GM10248 (cell line): ENCODE measurements at regions of chr12 and their contacts with region 1.

Region 1: DNA sequence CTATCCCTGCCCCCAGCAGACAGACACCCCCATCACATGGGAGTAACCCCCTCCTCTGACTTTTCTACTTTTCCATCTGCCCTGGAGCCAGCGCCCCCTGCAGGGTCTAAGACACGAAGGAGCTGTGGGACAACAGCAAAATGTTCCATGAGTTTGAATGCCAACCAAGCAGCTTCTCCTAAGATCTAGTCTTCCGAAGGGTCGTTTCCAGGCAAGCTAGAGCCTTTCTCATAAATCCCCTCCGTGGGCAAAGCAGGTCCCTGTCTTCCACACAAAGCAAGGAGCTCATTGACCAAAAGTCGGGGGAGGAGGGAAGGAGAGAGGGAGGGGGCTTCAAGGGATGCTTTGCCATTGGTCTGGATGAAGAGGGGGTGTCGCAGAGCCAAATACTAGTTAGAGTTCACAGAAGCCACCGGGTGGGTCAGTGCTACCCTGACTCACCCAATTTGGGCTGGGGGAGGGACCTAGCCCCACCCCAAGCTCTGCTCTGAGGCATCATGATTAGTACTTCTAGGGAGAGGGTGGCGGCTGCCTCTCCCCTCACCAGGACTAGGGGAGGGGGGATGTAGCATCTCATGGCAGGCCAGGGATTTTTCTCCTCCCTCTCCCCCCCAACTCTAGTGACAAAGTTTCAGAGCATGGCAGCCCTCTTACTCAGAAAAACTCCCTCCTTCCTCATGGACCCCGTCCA is 1.6 kb downstream of the MSI1 start:
- DNase-seq: no peak
- CTCF ChIP-seq: peak; percentile 41

Region 2: DNA sequence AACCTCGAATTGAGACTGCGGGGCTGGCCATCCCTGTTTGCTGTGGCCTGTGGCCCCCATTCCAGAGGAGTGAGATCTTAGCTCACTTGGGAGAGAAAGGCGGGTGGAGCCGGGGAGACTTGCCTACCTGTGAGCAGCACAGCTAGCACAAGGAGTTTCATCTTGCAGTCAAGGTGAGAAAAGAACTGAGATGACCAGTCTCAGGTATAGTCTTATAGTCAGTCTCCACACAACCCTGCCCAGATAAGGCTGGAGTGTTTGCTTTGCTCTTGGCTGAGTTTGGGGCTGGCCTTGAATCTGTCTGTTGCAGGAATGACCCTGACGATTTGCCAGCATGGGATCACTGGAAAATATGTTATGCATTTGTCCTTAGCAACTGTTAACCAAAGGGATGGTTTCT is 39.8 kb before region 1 on chr12 and contains the start of gene PLA2G1B:
- CTCF ChIA-PET with region 1: interaction called, 10 read pairs
- POLR2A ChIA-PET with region 1: no interaction called
- DNase-seq: no peak
- CTCF ChIP-seq: no peak

Region 3: DNA sequence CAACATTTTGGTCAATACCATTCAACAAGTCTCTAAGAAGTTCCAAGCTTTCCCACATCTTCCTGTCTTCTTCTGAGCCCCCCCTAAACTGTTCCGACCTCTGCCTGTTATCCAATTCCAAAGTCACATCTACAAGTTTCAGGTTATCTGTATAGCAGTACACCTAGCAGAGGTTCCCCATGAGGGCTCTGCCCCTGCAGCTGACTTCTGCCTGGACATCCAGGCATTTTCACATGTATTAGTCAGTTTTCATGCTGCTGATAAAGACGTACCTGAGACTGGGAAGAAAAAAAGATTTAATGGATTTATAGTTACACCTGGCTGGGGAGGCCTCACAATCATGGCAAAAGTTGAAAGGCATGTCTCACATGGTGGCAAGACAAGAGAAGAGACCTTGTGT is 29.6 kb before region 1 on chr12:
- CTCF ChIA-PET with region 1: no interaction called
- POLR2A ChIA-PET with region 1: no interaction called
- DNase-seq: no peak
- CTCF ChIP-seq: no peak

Region 4: DNA sequence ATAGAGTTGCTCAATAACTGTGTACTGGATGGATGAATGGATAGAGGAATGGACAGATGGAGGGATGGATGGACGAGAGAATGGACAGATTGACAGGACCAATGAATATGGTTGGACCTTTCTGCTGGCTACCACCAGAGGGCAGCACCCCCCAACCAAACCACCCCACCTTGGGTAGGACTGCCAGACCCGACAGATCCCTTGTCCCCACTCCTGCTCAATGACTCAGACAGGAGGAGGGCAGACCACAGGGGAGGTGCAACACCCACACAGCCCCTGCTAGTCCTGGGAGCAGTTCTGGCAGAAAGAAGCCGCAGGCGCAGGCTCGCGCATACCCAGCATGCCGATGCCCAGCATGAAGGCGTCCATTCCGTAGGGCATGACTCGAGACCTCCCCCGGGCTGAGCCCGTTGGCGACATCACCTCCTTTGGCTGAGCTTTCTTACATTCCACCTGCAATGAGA is 10.8 kb before region 1 on chr12:
- CTCF ChIA-PET with region 1: interaction called, 18 read pairs
- POLR2A ChIA-PET with region 1: interaction called, 6 read pairs
- DNase-seq: peak; percentile 81
- CTCF ChIP-seq: peak; percentile 81